Transverse colon (tissue), 4 donors: ENCODE measurements at regions of chr10 and their contacts with region 1.

Region 1: DNA sequence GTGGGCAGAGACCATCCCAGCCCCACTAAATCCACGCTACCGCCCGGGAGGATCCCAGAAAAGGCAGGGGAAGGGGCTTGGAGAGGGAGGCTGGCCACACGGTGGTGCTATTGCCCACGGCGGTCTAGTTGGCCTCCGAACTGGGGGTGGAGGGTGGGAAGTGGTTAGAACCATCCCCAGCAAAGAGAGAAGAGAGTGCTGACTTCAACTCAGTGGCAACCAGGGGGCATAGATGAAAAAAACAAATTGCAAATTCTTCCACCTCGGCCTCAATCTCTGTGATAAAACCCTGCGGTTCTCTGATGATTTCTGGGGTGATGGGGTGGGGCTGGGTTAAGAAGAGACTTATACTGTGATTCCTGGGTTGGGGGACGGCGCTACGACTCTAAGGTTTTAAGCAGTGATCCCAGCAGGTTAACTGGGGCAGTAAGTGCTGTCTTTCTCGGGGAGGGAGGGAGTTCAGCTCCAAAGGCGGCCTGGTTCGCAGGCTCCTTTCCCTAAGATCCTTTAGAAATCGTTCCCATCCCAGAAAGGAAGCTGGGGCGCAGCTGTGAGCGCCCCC is 154.5 kb upstream of the LYZL2 start:
- DNase-seq: peak; percentile 83
- H3K4me3 ChIP-seq: peak overlapping the region in 3 of 4 donors; percentile 57 to 67 (median 59)
- H3K27ac ChIP-seq: peak overlapping the region; percentile 90 to 95 (median 92)
- H3K4me1 ChIP-seq: peaks cover 8 to 32% (median 18%) of the 10 kb centered on the region in 4 donors
- H3K27me3 ChIP-seq: no peaks in the 10 kb centered on the region
- CTCF ChIP-seq: peak; percentile 77 to 83 (median 82)
- EP300 ChIP-seq: no peak
- POLR2A ChIP-seq: no peak

Region 2: DNA sequence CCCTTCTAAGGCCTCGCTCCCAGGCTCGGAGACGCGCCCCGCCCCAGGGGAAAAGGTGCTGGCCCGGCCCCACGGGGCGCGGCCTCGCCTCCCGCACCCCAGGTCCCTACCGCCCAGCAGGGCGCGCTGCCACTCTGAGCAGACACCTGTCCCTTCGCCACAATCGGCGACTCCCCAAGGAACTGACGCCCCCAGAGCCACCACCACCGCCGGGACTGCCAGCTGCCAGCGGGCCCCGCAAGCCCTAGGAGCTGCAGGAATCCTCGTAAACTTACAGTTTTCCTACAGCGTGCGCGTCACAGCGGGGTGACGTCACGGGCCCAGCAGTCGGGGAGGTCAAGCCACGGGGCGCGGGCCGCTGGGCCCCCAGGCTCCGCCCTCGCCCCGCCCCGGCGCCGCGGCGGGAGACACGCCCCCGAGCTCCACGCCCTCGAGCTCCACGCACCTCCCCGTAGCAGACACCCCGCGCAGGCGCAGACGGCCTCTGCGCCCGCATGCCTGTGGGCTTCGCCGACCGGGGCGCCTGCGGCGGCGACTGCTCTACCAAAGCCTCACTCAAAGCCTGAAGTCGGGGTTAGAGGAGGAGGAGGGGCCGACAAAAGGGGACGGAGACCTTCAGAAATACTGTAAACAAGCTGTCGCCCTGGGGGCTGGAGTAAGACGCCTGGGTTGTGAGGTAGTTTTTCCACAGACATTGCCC is 247.7 kb after region 1 on chr10 and contains the start of gene ZNF438:
- in situ Hi-C with region 1: loop called in 2 of 4 experiments (anchors 25 kb)
- intact Hi-C with region 1: loop called (anchors 5 kb)
- DNase-seq: peak; percentile 97
- H3K4me3 ChIP-seq: peak within 1 kb of the TSS; percentile 48 to 73 (median 52)
- H3K27ac ChIP-seq: peak within 1 kb of the TSS; percentile 98 to 100 (median 99)
- H3K4me1 ChIP-seq: peaks cover 2 to 22% (median 8%) of the 10 kb centered on the region in 4 donors
- H3K27me3 ChIP-seq: no peaks in the 10 kb centered on the region
- CTCF ChIP-seq: peak; percentile 45 to 92 (median 62)
- EP300 ChIP-seq: peak; percentile 7
- POLR2A ChIP-seq: peak; percentile 80
- total RNA-seq, gene ZNF438: 4.4 to 7.4 (median 6.4) TPM

Region 3: GRCh38 chr10:31133628-31134302 is 349.7 kb after region 1 on chr10:
- in situ Hi-C with region 1: no loop called
- intact Hi-C with region 1: loop called (anchors 10 kb)
- DNase-seq: peak; percentile 85
- H3K4me3 ChIP-seq: peak overlapping the region; percentile 1 to 59 (median 38)
- H3K27ac ChIP-seq: peak overlapping the region; percentile 75 to 87 (median 86)
- H3K4me1 ChIP-seq: peaks cover 5 to 24% (median 21%) of the 10 kb centered on the region in 4 donors
- H3K27me3 ChIP-seq: no peaks in the 10 kb centered on the region
- CTCF ChIP-seq: no peak
- EP300 ChIP-seq: no peak
- POLR2A ChIP-seq: no peak

Region 4: GRCh38 chr10:31318854-31319601 is 535.0 kb after region 1 on chr10 and contains the start of gene ZEB1:
- in situ Hi-C with region 1: no loop called
- intact Hi-C with region 1: loop called (anchors 2 kb)
- DNase-seq: peak; percentile 90
- H3K4me3 ChIP-seq: peak within 1 kb of the TSS; percentile 59 to 96 (median 82)
- H3K27ac ChIP-seq: peak within 1 kb of the TSS; percentile 92 to 97 (median 94)
- H3K4me1 ChIP-seq: peaks cover 0 to 34% (median 8%) of the 10 kb centered on the region in 4 donors
- H3K27me3 ChIP-seq: peaks cover 41% of the 10 kb centered on the region
- CTCF ChIP-seq: peak; percentile 40 to 56 (median 51)
- EP300 ChIP-seq: no peak
- POLR2A ChIP-seq: peak; percentile 30
- total RNA-seq, gene ZEB1: 22.4 to 61.1 (median 40.1) TPM

Region 5: DNA sequence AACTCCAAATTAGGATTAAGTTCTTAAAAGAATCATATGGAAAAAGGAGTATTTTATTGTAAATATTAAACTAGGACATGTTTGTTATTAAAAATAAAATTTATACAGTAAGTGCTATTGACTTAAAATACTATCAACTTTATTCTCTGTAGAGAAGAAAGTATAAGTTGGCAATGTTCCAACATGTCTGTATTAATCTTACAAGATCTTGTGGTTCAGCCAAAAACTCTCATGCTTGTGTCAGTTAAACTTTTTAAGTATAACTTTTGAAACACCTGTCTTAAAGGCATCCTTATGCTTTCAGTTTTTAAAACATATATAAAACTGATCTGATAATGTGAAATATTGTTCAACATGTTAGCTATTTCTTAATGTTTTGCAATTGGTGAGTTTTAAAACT is 695.7 kb after region 1 on chr10:
- in situ Hi-C with region 1: loop called in 1 of 4 experiments (anchors 10 kb)
- intact Hi-C with region 1: no loop called
- DNase-seq: no peak
- H3K4me3 ChIP-seq: no peak overlapping the region
- H3K27ac ChIP-seq: no peak overlapping the region
- H3K4me1 ChIP-seq: no peaks in the 10 kb centered on the region
- H3K27me3 ChIP-seq: no peaks in the 10 kb centered on the region
- CTCF ChIP-seq: no peak
- EP300 ChIP-seq: no peak
- POLR2A ChIP-seq: no peak

Region 6: GRCh38 chr10:31759799-31760626 is 976.0 kb after region 1 on chr10:
- in situ Hi-C with region 1: loop called in 1 of 4 experiments (anchors 25 kb)
- intact Hi-C with region 1: no loop called
- DNase-seq: peak; percentile 96
- H3K4me3 ChIP-seq: peak overlapping the region; percentile 51 to 84 (median 70)
- H3K27ac ChIP-seq: peak overlapping the region; percentile 92 to 99 (median 96)
- H3K4me1 ChIP-seq: peaks cover 10 to 23% (median 17%) of the 10 kb centered on the region in 4 donors
- H3K27me3 ChIP-seq: no peaks in the 10 kb centered on the region
- CTCF ChIP-seq: no peak
- EP300 ChIP-seq: no peak
- POLR2A ChIP-seq: peak; percentile 94

Region 7: DNA sequence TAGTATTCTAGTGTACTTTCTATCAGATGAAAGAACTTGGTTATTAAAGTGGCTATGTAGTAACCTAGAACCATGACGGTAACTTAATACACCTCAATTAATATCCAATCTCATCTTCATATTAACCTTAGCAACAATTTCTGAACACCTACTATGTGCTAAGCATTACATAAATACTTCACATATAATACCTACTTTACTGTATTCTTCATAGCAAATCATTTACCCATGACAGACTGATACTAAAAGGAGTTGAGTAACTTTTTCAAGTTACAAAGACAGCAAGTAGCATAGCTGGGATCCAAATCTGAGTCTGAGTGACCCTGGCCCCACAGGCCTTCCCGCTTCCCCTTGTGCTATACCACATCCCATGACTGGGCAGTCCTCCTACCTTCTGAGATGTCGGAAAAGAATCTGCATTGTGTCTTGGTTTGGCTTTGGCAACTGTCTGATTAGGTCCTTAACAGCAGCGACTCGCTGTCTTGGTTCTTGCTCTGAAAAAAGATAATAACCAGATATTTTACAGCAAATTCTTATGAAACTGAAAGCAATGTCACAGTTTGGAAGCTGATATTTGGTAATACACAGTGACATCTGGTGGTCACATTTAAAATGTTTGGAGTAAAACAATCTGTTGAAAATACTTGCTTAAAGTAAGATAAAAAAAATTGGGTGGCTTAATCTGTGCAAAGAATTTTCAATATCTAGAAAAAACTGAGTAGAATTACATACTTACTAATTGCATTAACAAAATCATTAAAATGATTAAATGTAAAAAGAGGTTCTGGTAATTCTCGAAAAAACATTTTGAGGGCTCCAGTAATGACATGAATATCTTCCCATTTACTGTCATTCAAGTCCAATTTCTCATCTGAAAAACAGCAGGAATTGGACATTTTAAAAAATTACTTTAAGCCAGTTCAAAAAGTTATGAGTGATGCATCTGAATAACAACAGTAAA is 1024.5 kb after region 1 on chr10:
- in situ Hi-C with region 1: loop called in 1 of 4 experiments (anchors 25 kb)
- intact Hi-C with region 1: no loop called
- DNase-seq: peak; percentile 11
- H3K4me3 ChIP-seq: peak overlapping the region in 1 of 4 donors; percentile 10
- H3K27ac ChIP-seq: peak overlapping the region; percentile 50 to 70 (median 60)
- H3K4me1 ChIP-seq: peaks cover 0 to 9% (median 4%) of the 10 kb centered on the region in 4 donors
- H3K27me3 ChIP-seq: no peaks in the 10 kb centered on the region
- CTCF ChIP-seq: peak; percentile 47 to 73 (median 60)
- EP300 ChIP-seq: no peak
- POLR2A ChIP-seq: no peak